ENCODE measurements at regions of chr16 and their contacts with region 1.

Region 1: GRCh38 chr16:73565262-73565661 is 517.3 kb upstream of the ZFHX3 start:
- DNase-seq: no peak
- H3K4me3 ChIP-seq: no peak overlapping the region
- H3K27ac ChIP-seq: no peak overlapping the region
- H3K4me1 ChIP-seq: no peaks in the 10 kb centered on the region
- H3K27me3 ChIP-seq: no peaks in the 10 kb centered on the region
- CTCF ChIP-seq: peak in 2 of 4 experiments; percentile 25 to 37
- POLR2A ChIP-seq: no peak

Region 2: GRCh38 chr16:73616166-73616753 is 51.0 kb after region 1 on chr16:
- intact Hi-C with region 1: no loop called
- DNase-seq: no peak
- H3K4me3 ChIP-seq: no peak overlapping the region
- H3K27ac ChIP-seq: no peak overlapping the region
- H3K4me1 ChIP-seq: no peaks in the 10 kb centered on the region
- H3K27me3 ChIP-seq: no peaks in the 10 kb centered on the region
- CTCF ChIP-seq: no peak
- POLR2A ChIP-seq: no peak

Region 3: GRCh38 chr16:73878611-73879010 is 313.3 kb after region 1 on chr16:
- intact Hi-C with region 1: loop called (anchors 1 kb)
- DNase-seq: peak; percentile 10
- H3K4me3 ChIP-seq: no peak overlapping the region
- H3K27ac ChIP-seq: no peak overlapping the region
- H3K4me1 ChIP-seq: no peaks in the 10 kb centered on the region
- H3K27me3 ChIP-seq: no peaks in the 10 kb centered on the region
- CTCF ChIP-seq: peak in 3 of 4 experiments; percentile 38 to 67 (median 56)
- POLR2A ChIP-seq: no peak